CD8-positive, alpha-beta T cell (primary cell): ENCODE measurements at regions of chr1 and their contacts with region 1.

Region 1: GRCh38 chr1:40802078-40802741 is 18.6 kb downstream of the KCNQ4 start:
- DNase-seq: peak; percentile 69 to 93 (median 84)
- ATAC-seq: peak; percentile 95
- H3K4me3 ChIP-seq: peak overlapping the region; percentile 51 to 87
- H3K4me3 Mint-ChIP-seq: peak overlapping the region; percentile 74
- H3K27ac ChIP-seq: peak overlapping the region; percentile 49 to 55
- H3K27ac Mint-ChIP-seq: peak overlapping the region; percentile 75
- H3K4me1 ChIP-seq: peaks cover 29% of the 10 kb centered on the region
- H3K4me1 Mint-ChIP-seq: peaks cover 30% of the 10 kb centered on the region
- H3K27me3 ChIP-seq: no peaks in the 10 kb centered on the region
- H3K27me3 Mint-ChIP-seq: no peaks in the 10 kb centered on the region
- CTCF ChIP-seq: no peak

Region 2: DNA sequence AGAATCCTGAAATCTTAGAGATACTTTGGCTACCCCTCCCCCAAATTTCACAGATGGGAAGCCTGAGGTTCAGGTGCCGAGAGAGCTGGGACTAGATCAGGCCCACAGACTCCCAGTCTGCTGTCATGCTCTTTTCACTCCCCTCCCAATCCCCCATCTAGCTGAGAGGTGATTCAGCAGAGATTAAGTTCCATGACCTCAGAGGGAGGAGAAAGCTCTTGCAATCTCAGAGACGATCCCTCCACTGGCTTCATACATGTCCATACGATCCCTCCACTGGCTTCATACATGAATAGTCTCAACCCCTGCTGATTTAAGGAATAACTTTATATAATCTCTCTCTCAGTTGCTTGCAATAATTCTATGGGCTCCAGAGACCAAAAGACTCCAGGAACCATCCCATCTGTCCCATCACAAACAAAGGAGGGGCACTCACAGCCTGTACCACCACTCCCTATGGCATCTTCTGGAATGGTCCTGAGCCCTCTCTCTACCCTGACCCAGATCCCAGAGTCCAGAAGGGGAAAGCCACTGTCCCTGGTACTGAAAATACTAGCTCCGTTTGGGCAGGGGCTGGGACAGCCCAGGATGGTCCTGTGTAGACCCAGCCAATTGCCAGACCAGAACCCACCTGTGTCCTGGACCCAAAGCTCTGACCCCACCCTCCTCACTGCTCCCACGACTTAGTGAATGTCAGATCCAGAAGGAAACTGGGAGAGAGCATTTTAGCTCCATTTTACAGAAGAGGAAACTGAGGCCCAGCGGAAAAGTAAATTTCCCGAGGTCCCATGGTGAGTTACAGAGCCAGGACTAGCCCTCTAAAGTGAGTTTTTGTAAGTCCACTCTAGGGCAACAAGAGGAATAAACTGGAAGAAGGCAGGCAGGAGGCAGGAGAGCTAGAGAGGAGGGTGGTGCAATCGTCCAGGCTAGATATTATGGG is 163.8 kb before region 1 on chr1:
- CTCF ChIA-PET with region 1: no interaction called
- POLR2A ChIA-PET with region 1: no interaction called
- intact Hi-C with region 1: no loop called
- DNase-seq: no peak
- ATAC-seq: no peak
- H3K4me3 ChIP-seq: no peak overlapping the region
- H3K4me3 Mint-ChIP-seq: no peak overlapping the region
- H3K27ac ChIP-seq: no peak overlapping the region
- H3K27ac Mint-ChIP-seq: peak overlapping the region; percentile 32
- H3K4me1 ChIP-seq: peaks cover 18% of the 10 kb centered on the region
- H3K4me1 Mint-ChIP-seq: peaks cover 15% of the 10 kb centered on the region
- H3K27me3 ChIP-seq: no peaks in the 10 kb centered on the region
- H3K27me3 Mint-ChIP-seq: no peaks in the 10 kb centered on the region
- CTCF ChIP-seq: no peak

Region 3: GRCh38 chr1:40709100-40709801 is 93.0 kb before region 1 on chr1:
- CTCF ChIA-PET with region 1: no interaction called
- POLR2A ChIA-PET with region 1: no interaction called
- intact Hi-C with region 1: loop called (anchors 2 to 5 kb)
- DNase-seq: peak; percentile 43 to 94 (median 74)
- ATAC-seq: peak; percentile 95
- H3K4me3 ChIP-seq: peak overlapping the region; percentile 63
- H3K4me3 Mint-ChIP-seq: peak overlapping the region; percentile 99
- H3K27ac ChIP-seq: peak overlapping the region; percentile 67 to 94
- H3K27ac Mint-ChIP-seq: peak overlapping the region; percentile 98
- H3K4me1 ChIP-seq: peaks cover 48% of the 10 kb centered on the region
- H3K4me1 Mint-ChIP-seq: peaks cover 69% of the 10 kb centered on the region
- H3K27me3 ChIP-seq: no peaks in the 10 kb centered on the region
- H3K27me3 Mint-ChIP-seq: no peaks in the 10 kb centered on the region
- CTCF ChIP-seq: no peak

Region 4: GRCh38 chr1:40818264-40818961 is 16.2 kb after region 1 on chr1:
- CTCF ChIA-PET with region 1: no interaction called
- POLR2A ChIA-PET with region 1: interaction called, 3 read pairs
- intact Hi-C with region 1: loop called (anchors 1 kb)
- DNase-seq: peak; percentile 76 to 94 (median 88)
- ATAC-seq: peak; percentile 95
- H3K4me3 ChIP-seq: peak overlapping the region; percentile 54 to 76
- H3K4me3 Mint-ChIP-seq: peak overlapping the region; percentile 83
- H3K27ac ChIP-seq: peak overlapping the region; percentile 39 to 66
- H3K27ac Mint-ChIP-seq: peak overlapping the region; percentile 85
- H3K4me1 ChIP-seq: peaks cover 10% of the 10 kb centered on the region
- H3K4me1 Mint-ChIP-seq: peaks cover 13% of the 10 kb centered on the region
- H3K27me3 ChIP-seq: no peaks in the 10 kb centered on the region
- H3K27me3 Mint-ChIP-seq: no peaks in the 10 kb centered on the region
- CTCF ChIP-seq: no peak

Region 5: DNA sequence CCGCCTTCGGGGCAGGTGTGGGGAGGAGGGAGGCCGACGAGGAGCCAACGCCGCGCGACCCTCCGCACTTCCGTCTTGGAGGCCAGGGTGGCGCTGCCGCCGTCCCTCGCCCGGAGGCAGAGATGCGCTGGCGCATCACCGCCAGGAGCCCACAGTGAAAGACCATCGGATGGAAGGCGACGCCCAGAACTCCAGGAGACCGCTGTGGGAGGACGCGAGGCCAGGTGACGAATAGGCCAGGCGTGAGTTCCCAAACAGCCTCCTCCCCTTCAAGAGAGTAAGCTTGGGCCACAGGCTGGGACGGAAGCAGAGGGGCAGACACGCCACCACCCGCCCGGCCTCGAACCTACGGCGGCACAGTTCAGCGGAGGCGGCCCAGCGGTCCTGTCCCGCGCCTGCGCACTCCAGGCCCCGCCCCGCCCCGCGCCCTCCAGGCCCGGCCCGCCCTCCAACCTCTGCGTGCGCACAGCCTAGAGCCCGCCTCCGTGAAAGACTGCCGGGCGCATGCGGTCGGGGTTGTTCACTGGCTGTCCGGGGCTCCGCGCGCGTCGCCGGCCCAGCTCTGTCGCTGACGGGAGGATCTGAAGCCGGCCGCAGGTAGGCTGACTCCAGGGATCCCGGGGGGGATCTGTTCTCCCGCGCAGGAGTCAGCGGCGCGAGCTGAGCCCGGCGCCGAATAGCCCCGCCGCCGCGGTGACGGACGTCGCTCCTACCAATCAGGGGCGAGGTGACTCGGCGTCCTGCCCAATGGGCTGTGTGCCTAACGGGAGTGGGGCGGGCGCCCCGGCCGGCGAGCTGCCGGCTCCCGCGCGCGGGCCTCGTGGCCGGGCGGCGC is 177.2 kb after region 1 on chr1 and contains the start of gene CTPS1:
- CTCF ChIA-PET with region 1: no interaction called
- POLR2A ChIA-PET with region 1: no interaction called
- intact Hi-C with region 1: loop called (anchors 5 kb)
- DNase-seq: peak; percentile 92 to 98 (median 95)
- ATAC-seq: peak; percentile 81
- H3K4me3 ChIP-seq: peak within 1 kb of the TSS; percentile 83 to 91
- H3K4me3 Mint-ChIP-seq: peak within 1 kb of the TSS; percentile 95
- H3K27ac ChIP-seq: peak within 1 kb of the TSS; percentile 85 to 95
- H3K27ac Mint-ChIP-seq: peak within 1 kb of the TSS; percentile 97
- H3K4me1 ChIP-seq: peaks cover 16% of the 10 kb centered on the region
- H3K4me1 Mint-ChIP-seq: peaks cover 35% of the 10 kb centered on the region
- H3K27me3 ChIP-seq: no peaks in the 10 kb centered on the region
- H3K27me3 Mint-ChIP-seq: no peaks in the 10 kb centered on the region
- CTCF ChIP-seq: no peak
- total RNA-seq, gene CTPS1: 68.5 to 69.0 TPM

Region 6: GRCh38 chr1:41353726-41354125 is 551.5 kb after region 1 on chr1:
- CTCF ChIA-PET with region 1: no interaction called
- POLR2A ChIA-PET with region 1: no interaction called
- intact Hi-C with region 1: no loop called
- DNase-seq: no peak
- ATAC-seq: no peak
- H3K4me3 ChIP-seq: no peak overlapping the region
- H3K4me3 Mint-ChIP-seq: no peak overlapping the region
- H3K27ac ChIP-seq: no peak overlapping the region
- H3K27ac Mint-ChIP-seq: no peak overlapping the region
- H3K4me1 ChIP-seq: peaks cover 3% of the 10 kb centered on the region
- H3K4me1 Mint-ChIP-seq: no peaks in the 10 kb centered on the region
- H3K27me3 ChIP-seq: peaks cover 0 to 2% of the 10 kb centered on the region in 2 experiments
- H3K27me3 Mint-ChIP-seq: peaks cover 13% of the 10 kb centered on the region
- CTCF ChIP-seq: no peak